Activated CD4-positive, alpha-beta T cell treated with anti-CD3 and anti-CD28 coated beads, Interleukin-2, amount 10 ng/mL, durations not matched to agents 24 days and 14 days (primary cell): ENCODE measurements at regions of chr18 and their contacts with region 1.

Region 1: DNA sequence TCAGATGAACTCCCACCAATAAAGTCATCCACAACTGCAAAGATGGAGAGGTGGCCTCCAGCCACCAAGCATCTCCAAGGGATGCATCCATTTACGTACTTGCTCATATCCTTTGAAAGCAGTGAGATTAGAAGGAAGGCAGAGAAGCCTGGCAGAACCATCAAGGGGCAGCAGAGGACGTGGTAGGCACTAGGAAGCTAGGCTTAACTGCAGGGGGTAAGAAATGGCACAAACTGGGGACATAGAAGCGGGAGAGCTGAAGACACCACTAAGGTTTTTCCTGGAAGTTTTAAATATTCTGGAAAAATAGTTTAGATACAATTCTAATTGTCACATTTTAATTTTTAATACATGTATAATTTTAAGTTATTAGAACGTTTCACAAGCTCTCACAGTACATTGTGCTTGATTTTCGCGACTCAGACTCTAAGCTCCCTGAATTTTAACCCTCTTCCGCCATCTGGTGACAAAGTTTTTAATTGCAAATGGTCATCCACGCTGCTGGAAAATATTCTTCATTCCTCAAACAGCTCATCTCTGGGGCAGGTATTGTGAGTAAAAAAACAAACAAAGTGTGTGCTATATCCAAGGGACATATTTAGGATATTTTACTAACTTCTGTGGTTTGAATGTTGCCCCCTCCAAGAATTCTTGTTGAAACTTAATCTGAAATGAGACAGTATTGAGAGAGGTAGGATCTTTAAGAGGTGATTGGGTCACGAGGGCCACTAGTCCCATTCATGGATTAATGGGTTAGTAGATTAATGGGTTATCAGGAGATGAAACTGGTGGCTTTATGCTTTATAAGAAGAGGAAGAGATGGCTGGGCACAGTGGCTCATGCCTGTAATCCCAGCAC is 1.6 kb upstream of the PSTPIP2 start:
- DNase-seq: peak; percentile 91
- H3K4me3 Mint-ChIP-seq: no peak overlapping the region
- H3K27ac Mint-ChIP-seq: no peak overlapping the region
- H3K4me1 Mint-ChIP-seq: peaks cover 31% of the 10 kb centered on the region
- H3K27me3 Mint-ChIP-seq: no peaks in the 10 kb centered on the region

Region 2: DNA sequence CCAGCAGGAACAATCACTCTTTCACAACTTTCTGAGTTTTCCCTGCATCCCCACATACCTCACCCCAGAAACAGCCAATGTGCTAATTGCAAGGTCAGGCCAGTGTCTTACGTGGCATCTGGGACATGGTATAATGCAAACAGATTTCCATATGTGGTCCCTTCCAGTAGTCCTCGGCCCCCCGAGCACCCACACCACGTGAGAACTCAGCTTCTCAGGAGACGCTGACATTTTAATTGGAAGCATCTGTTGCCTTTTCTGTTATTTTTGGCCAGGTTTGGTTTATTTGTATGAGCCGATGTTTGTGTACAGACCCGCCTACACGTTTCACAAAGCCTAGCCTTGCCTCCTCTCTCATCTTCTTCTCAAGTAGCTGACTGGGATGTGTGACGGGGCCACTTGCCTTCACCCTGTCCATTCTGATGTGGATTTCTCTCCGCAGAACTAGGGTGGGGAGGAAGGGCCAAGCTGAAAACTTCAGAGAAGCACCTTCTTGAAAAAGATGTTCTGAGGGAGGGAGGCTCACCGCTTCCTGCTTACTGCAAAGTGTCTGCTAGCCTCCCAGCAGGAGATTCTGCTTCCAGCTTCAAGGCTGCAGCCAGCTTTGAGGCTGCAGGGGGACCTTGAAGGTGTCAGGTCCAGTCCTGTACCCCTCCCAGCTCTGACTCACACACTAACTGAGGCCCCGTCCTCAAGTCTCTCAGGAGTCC is 568.1 kb before region 1 on chr18:
- intact Hi-C with region 1: no loop called
- DNase-seq: no peak
- H3K4me3 Mint-ChIP-seq: no peak overlapping the region
- H3K27ac Mint-ChIP-seq: no peak overlapping the region
- H3K4me1 Mint-ChIP-seq: no peaks in the 10 kb centered on the region
- H3K27me3 Mint-ChIP-seq: no peaks in the 10 kb centered on the region

Region 3: DNA sequence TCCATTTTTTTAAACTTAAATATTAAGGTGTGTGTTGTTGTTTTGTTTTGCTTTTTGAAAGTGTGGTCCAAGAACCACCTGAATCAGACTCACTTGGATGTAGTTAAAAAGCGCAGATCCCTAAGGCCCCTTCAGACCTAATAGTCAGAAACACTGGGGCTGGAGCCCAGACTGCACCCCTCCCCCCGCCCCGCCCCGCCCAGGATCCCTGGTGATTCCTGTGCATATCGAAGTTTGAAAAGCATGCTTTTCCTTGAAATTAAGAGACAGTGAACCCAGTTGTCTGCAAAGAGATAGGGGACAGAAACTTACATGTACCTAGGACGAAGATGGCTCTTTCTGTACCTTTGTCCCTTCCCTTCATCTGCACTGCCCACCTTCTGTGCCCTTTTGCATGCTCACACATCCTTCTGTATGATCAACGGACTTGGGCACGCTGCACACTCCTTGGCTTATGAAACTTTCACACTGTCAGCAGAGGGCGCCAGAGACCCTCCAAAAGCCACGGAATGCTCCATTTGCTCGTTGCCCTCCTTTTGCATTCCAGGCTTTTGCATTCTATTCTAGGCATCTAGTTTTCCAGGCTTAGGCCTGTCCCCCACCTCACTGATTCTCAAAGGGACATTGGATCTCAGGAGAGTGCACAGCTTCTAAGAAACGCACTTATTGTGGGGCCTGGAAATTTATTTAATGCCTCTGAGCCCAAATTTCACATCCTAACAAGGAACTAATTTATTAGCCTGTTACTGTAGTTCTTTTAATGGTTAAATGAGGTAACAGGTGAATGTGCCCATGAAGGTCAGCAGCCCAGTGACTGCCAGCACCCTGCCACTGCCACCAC is 382.5 kb before region 1 on chr18:
- intact Hi-C with region 1: loop called (anchors 2 kb)
- DNase-seq: peak; percentile 92
- H3K4me3 Mint-ChIP-seq: no peak overlapping the region
- H3K27ac Mint-ChIP-seq: no peak overlapping the region
- H3K4me1 Mint-ChIP-seq: peaks cover 35% of the 10 kb centered on the region
- H3K27me3 Mint-ChIP-seq: peaks cover 49% of the 10 kb centered on the region

Region 4: DNA sequence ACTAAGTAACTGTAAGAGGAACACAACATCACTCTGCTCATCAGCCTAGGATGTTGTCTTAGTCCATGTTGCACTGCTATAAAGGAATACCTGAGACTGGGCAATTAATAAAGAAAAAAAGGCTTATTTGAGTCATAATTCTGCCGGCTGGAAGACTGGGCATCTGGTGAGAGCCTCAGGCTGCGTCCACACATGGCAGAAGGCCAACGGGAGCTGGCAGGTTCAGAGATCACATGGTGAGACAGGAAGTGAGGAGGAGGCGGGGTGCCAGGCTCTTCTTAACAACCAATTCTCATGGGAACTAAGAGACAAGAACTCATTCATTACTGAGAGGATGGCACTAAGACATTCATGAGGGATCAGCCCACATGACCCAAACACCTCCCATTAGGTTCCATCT is 153.3 kb before region 1 on chr18:
- intact Hi-C with region 1: loop called (anchors 5 kb)
- DNase-seq: no peak
- H3K4me3 Mint-ChIP-seq: no peak overlapping the region
- H3K27ac Mint-ChIP-seq: no peak overlapping the region
- H3K4me1 Mint-ChIP-seq: peaks cover 4% of the 10 kb centered on the region
- H3K27me3 Mint-ChIP-seq: no peaks in the 10 kb centered on the region

Region 5: DNA sequence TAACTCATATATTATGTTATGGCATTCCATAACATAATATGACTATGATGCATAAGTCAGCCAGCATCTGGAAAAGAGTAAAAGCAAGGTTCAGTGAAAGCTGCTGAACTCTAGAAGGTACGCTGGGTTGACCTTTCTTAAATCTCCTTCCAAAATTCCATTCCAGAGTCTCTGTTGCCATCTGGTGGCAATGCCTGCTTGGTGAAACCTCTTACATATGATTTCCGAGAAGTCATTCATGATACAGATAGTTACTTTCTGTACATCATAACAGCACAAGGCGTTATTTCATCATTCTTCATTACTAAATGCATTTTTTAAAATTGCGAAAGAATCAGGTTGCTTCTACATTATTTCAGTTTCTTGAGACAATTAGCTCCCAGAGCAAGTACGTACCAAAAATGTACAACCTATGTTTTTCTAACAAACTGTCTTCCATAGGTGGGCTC is 99.6 kb before region 1 on chr18:
- intact Hi-C with region 1: loop called (anchors 1 kb)
- DNase-seq: peak; percentile 91
- H3K4me3 Mint-ChIP-seq: no peak overlapping the region
- H3K27ac Mint-ChIP-seq: peak overlapping the region; percentile 25
- H3K4me1 Mint-ChIP-seq: peaks cover 6% of the 10 kb centered on the region
- H3K27me3 Mint-ChIP-seq: no peaks in the 10 kb centered on the region

Region 6: GRCh38 chr18:46013484-46014189 is 60.1 kb before region 1 on chr18:
- intact Hi-C with region 1: loop called (anchors 1 kb)
- DNase-seq: no peak
- H3K4me3 Mint-ChIP-seq: peak overlapping the region; percentile 26
- H3K27ac Mint-ChIP-seq: peak overlapping the region; percentile 41
- H3K4me1 Mint-ChIP-seq: peaks cover 13% of the 10 kb centered on the region
- H3K27me3 Mint-ChIP-seq: no peaks in the 10 kb centered on the region

Region 7: DNA sequence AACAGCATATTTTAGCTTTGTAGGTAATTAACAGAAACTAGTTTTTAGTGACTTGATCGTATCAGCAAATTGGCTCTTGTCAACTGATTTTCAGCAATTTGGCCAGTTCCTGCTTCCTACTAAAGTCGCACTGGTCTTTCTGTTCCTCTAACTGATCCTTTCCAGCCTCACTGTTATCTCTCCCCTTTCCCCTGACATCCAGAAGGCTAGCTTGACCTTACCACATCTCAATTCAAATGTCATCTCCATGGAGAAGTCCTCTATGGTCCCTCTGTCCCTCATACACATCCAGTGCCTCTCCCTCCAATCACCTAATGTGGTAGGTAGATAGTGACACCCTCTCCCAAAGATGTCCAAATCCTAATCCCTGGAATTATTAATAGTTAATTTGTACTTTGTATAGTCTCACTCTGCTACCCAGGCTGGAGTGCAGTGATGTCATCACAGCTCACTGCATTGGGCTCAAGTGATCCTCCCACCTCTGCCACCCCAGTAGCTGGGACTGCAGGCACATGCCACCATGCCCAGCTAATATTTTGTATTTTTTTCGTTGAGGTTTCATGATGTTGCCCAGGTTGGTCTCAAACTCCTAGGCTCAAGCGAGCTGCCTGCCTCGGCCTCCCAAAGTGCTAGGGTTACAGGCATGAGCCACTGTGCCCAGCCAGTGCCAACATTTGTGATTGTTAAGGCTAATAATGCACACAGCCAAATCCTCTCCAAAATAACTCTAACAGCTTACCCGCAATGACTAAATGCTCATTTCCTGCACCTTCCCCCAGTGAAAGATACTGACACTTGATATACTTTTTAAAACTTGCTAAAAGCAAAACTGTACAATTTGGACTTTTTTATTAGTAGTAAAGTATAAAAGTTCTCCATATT is 18.5 kb before region 1 on chr18:
- intact Hi-C with region 1: loop called (anchors 2 kb)
- DNase-seq: no peak
- H3K4me3 Mint-ChIP-seq: peak overlapping the region; percentile 62
- H3K27ac Mint-ChIP-seq: peak overlapping the region; percentile 55
- H3K4me1 Mint-ChIP-seq: peaks cover 32% of the 10 kb centered on the region
- H3K27me3 Mint-ChIP-seq: no peaks in the 10 kb centered on the region

Region 8: GRCh38 chr18:46097801-46098615 is 24.3 kb after region 1 on chr18 and contains the start of gene ATP5F1A:
- intact Hi-C with region 1: no loop called
- DNase-seq: peak; percentile 95
- H3K4me3 Mint-ChIP-seq: peak within 1 kb of the TSS; percentile 98
- H3K27ac Mint-ChIP-seq: peak within 1 kb of the TSS; percentile 99
- H3K4me1 Mint-ChIP-seq: peaks cover 19% of the 10 kb centered on the region
- H3K27me3 Mint-ChIP-seq: no peaks in the 10 kb centered on the region
- total RNA-seq, gene ATP5F1A: 440 and 443 TPM in 2 replicates

Region 9: GRCh38 chr18:46148810-46149209 is 75.1 kb after region 1 on chr18:
- intact Hi-C with region 1: no loop called
- DNase-seq: peak; percentile 88
- H3K4me3 Mint-ChIP-seq: no peak overlapping the region
- H3K27ac Mint-ChIP-seq: peak overlapping the region; percentile 7
- H3K4me1 Mint-ChIP-seq: peaks cover 26% of the 10 kb centered on the region
- H3K27me3 Mint-ChIP-seq: no peaks in the 10 kb centered on the region